ENCODE measurements at regions of chr17 and their contacts with region 1.

Region 1: DNA sequence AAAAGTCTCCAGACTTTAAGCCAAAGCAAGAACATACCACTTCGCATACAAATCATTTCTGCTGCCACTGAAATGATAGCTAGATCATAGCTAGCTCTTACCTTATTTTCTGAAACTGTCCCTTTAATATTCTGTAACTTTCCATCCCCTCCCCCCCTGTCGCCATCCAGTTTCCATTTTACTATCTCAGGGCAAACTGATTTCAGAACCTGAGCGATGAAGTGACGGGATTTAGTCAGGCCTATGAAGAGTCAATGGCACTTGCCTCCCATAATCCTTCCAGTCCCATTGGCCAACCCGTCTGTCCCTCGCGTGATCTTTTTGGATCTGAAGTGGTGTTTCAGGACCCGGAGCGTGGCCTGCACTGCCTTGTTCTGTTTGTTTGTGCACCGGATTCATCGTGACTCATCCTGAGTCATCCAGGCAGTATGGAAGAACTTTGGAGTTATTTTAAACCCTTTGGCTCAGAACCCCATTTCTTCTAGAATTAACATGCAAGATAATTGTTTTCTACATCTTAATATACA is 199.8 kb upstream of the CHMP6 start:
- DNase-seq: no peak
- ATAC-seq: no peak
- H3K4me3 Mint-ChIP-seq: peak overlapping the region; percentile 70 to 91 (median 81)
- H3K27ac Mint-ChIP-seq: peak overlapping the region; percentile 93 to 99 (median 96)
- H3K4me1 Mint-ChIP-seq: peaks cover 47 to 77% (median 70%) of the 10 kb centered on the region in 4 donors
- H3K27me3 Mint-ChIP-seq: no peaks in the 10 kb centered on the region

Region 2: GRCh38 chr17:80584176-80584905 is 207.5 kb before region 1 on chr17:
- POLR2A ChIA-PET with region 1: no interaction called
- DNase-seq: no peak
- ATAC-seq: no peak
- H3K4me3 Mint-ChIP-seq: no peak overlapping the region
- H3K27ac Mint-ChIP-seq: peak overlapping the region in 1 of 10 donors; percentile 11
- H3K4me1 Mint-ChIP-seq: peaks cover 28 to 54% (median 35%) of the 10 kb centered on the region in 4 donors
- H3K27me3 Mint-ChIP-seq: no peaks in the 10 kb centered on the region

Region 3: GRCh38 chr17:80774643-80775281 is 17.1 kb before region 1 on chr17:
- POLR2A ChIA-PET with region 1: interaction called, 67 read pairs
- DNase-seq: peak in 1 of 10 donors; percentile 39
- ATAC-seq: peak; percentile 70 to 72
- H3K4me3 Mint-ChIP-seq: peak overlapping the region; percentile 67 to 95 (median 82)
- H3K27ac Mint-ChIP-seq: peak overlapping the region; percentile 88 to 99 (median 95)
- H3K4me1 Mint-ChIP-seq: peaks cover 34 to 74% (median 59%) of the 10 kb centered on the region in 4 donors
- H3K27me3 Mint-ChIP-seq: no peaks in the 10 kb centered on the region

Region 4: GRCh38 chr17:80876950-80877728 is 85.3 kb after region 1 on chr17:
- POLR2A ChIA-PET with region 1: no interaction called
- DNase-seq: peak in 4 of 10 donors; percentile 20 to 58 (median 32)
- ATAC-seq: peak; percentile 57 to 66
- H3K4me3 Mint-ChIP-seq: peak overlapping the region; percentile 61 to 85 (median 82)
- H3K27ac Mint-ChIP-seq: peak overlapping the region; percentile 56 to 95 (median 86)
- H3K4me1 Mint-ChIP-seq: peaks cover 20 to 54% (median 38%) of the 10 kb centered on the region in 4 donors
- H3K27me3 Mint-ChIP-seq: no peaks in the 10 kb centered on the region

Measured in naive thymus-derived CD8-positive, alpha-beta T cell (primary cell).